ENCODE measurements at regions of chr2 and their contacts with region 1.

Region 1: GRCh38 chr2:171173089-171173488 is 12.4 kb upstream of the TLK1 start:
- DNase-seq: no peak
- ATAC-seq: no peak
- H3K4me3 ChIP-seq: no peak overlapping the region
- H3K4me3 Mint-ChIP-seq: no peak overlapping the region
- H3K27ac ChIP-seq: no peak overlapping the region
- H3K27ac Mint-ChIP-seq: no peak overlapping the region
- H3K4me1 ChIP-seq: no peaks in the 10 kb centered on the region
- H3K4me1 Mint-ChIP-seq: no peaks in the 10 kb centered on the region
- H3K27me3 ChIP-seq: no peaks in the 10 kb centered on the region
- H3K27me3 Mint-ChIP-seq: no peaks in the 10 kb centered on the region
- CTCF ChIP-seq: no peak

Region 2: DNA sequence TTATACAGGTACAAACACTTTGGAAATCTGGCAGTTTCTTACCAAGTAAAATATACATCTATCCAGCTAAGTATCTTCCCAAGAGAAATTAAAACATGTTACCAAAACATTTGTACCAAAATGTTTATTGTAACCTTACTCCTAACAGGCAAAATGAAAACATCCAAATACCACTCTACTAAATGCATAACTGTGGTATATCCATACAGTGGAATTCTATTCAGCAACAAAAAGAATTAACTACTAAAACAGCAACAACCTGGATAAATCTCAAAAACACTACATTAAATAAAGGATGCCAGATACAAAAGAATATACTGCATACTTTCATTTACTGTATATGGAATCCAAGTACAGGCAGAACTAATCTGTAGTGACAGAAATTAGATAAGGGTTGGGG is 63.5 kb before region 1 on chr2:
- CTCF ChIA-PET with region 1: no interaction called
- POLR2A ChIA-PET with region 1: no interaction called
- intact Hi-C with region 1: no loop called
- DNase-seq: no peak
- ATAC-seq: no peak
- H3K4me3 ChIP-seq: no peak overlapping the region
- H3K4me3 Mint-ChIP-seq: no peak overlapping the region
- H3K27ac ChIP-seq: no peak overlapping the region
- H3K27ac Mint-ChIP-seq: peak overlapping the region; percentile 21
- H3K4me1 ChIP-seq: peaks cover 4% of the 10 kb centered on the region
- H3K4me1 Mint-ChIP-seq: peaks cover 80% of the 10 kb centered on the region
- H3K27me3 ChIP-seq: no peaks in the 10 kb centered on the region
- H3K27me3 Mint-ChIP-seq: no peaks in the 10 kb centered on the region
- CTCF ChIP-seq: no peak

Region 3: GRCh38 chr2:171287611-171288010 is 114.5 kb after region 1 on chr2:
- CTCF ChIA-PET with region 1: no interaction called
- POLR2A ChIA-PET with region 1: no interaction called
- intact Hi-C with region 1: no loop called
- DNase-seq: no peak
- ATAC-seq: no peak
- H3K4me3 ChIP-seq: no peak overlapping the region
- H3K4me3 Mint-ChIP-seq: no peak overlapping the region
- H3K27ac ChIP-seq: no peak overlapping the region
- H3K27ac Mint-ChIP-seq: no peak overlapping the region
- H3K4me1 ChIP-seq: no peaks in the 10 kb centered on the region
- H3K4me1 Mint-ChIP-seq: no peaks in the 10 kb centered on the region
- H3K27me3 ChIP-seq: no peaks in the 10 kb centered on the region
- H3K27me3 Mint-ChIP-seq: no peaks in the 10 kb centered on the region
- CTCF ChIP-seq: no peak

Region 4: GRCh38 chr2:171325886-171326585 is 152.9 kb after region 1 on chr2:
- CTCF ChIA-PET with region 1: no interaction called
- POLR2A ChIA-PET with region 1: no interaction called
- intact Hi-C with region 1: loop called (anchors 10 kb)
- DNase-seq: peak in 3 of 14 experiments; percentile 72 to 77 (median 76)
- ATAC-seq: peak; percentile 94
- H3K4me3 ChIP-seq: peak overlapping the region; percentile 14
- H3K4me3 Mint-ChIP-seq: peak overlapping the region; percentile 52
- H3K27ac ChIP-seq: peak overlapping the region in 1 of 2 donors; percentile 13
- H3K27ac Mint-ChIP-seq: peak overlapping the region; percentile 72
- H3K4me1 ChIP-seq: peaks cover 22% of the 10 kb centered on the region
- H3K4me1 Mint-ChIP-seq: peaks cover 49% of the 10 kb centered on the region
- H3K27me3 ChIP-seq: no peaks in the 10 kb centered on the region
- H3K27me3 Mint-ChIP-seq: no peaks in the 10 kb centered on the region
- CTCF ChIP-seq: no peak